ENCODE measurements at regions of chr11 and their contacts with region 1.

Region 1: DNA sequence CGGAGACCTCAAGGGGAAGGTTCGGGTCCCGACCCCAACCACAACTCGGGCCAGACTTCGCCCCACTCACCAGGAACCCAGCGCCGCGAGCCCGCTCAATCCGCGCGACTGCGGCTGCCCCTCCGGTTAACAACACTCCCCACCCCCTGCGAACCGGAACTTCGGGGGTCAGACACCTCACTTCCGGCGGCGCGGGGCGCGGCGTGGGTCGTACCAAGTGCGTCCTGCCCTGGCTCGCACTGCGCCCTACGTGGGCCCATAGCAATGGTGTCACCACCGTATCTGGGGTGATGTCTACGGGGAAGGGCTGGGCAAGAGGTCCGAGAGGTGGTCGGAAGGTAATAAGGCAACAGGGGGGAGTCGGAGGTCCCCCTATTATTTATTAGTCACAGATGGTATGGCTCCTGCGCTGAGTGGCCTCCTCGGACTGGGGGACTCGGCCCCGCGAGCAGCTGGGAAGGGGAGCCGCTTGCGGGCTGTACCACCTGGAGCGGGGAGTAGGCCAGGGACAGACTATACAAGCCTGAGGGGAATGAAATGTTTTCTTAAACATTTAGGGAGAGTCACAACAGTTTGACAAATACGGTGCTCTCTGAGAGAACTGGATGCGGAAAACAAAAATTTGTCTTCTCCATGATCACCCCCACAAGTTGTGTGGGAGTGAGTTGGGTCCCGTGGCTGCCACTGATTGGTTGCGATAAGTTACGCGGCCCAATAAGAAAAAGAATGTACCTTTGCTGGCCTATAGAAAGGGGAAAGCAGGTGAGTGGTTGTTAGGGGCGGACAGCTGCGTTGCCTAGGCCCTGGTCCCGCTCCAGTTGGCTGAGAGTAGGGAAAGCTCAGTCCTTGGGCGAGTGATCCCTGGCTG is at the start of gene SYVN1:
- DNase-seq: peak; percentile 98
- H3K4me3 Mint-ChIP-seq: peak within 1 kb of the TSS; percentile 99
- H3K27ac Mint-ChIP-seq: peak within 1 kb of the TSS; percentile 100
- H3K4me1 Mint-ChIP-seq: peaks cover 28% of the 10 kb centered on the region
- H3K27me3 Mint-ChIP-seq: no peaks in the 10 kb centered on the region
- CTCF ChIP-seq: no peak
- total RNA-seq, gene SYVN1: 74.9 and 99.8 TPM in 2 replicates

Region 2: DNA sequence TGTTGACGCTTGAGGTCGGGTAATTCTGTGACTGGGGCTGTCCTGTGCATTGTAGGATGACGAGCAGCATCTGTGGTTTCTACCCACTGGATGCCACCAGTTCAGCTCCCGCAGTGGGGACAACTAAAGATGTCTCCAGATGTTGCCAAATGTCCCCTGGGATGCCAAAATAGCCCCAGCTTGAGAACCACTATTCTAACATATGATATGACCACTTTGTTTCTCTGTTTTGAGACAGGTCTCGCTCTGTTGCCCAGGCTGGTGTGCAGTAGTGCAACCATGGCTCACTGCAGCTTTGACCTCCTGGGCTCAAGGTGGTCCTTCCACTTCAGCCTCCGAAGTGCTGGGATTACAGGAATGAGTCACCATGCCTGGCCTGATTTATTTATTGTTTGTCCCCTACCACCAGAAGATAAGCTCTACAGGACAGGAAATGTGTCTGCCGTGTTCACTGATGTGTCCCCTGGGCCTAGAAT is 319.9 kb before region 1 on chr11:
- CTCF ChIA-PET with region 1: no interaction called
- POLR2A ChIA-PET with region 1: no interaction called
- intact Hi-C with region 1: no loop called
- DNase-seq: no peak
- H3K4me3 Mint-ChIP-seq: no peak overlapping the region
- H3K27ac Mint-ChIP-seq: no peak overlapping the region
- H3K4me1 Mint-ChIP-seq: peaks cover 6% of the 10 kb centered on the region
- H3K27me3 Mint-ChIP-seq: no peaks in the 10 kb centered on the region
- CTCF ChIP-seq: no peak

Region 3: DNA sequence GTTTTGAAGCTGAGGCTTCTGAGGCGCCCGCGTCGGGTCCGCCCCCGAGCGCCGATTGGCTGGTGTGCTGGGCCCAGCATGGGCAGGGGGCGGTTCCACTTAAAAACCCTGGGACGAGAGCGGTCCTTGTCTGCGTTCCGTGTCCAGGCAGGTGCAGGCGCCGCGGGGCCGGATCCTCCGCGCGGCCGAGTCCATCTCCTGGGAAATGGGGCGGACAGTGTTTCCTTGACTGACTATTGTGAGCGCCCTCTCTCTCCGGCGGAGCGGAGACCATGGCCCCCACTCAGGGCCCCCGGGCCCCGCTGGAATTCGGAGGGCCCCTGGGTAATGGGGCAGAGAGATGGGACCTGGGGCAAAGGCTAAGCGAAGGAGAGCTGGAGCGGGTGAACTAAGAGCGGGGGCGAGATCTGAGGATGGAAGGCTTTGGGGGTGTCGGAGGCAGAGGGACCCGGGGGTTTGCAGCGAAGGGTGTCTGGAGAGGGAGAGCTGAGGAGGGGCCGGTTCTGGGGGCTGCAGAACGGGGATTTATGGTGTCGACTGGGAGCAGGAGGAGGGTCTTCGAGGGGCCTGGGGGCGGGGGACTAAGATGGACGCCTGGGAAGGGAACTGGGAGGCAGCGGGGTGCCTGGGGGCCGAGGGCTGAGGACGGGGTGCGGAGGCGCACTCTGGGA is 22.7 kb before region 1 on chr11 and contains the start of gene TM7SF2:
- CTCF ChIA-PET with region 1: interaction called, 4 read pairs
- POLR2A ChIA-PET with region 1: interaction called, 56 read pairs
- intact Hi-C with region 1: no loop called
- DNase-seq: peak; percentile 96
- H3K4me3 Mint-ChIP-seq: peak within 1 kb of the TSS; percentile 93
- H3K27ac Mint-ChIP-seq: peak within 1 kb of the TSS; percentile 94
- H3K4me1 Mint-ChIP-seq: peaks cover 11% of the 10 kb centered on the region
- H3K27me3 Mint-ChIP-seq: no peaks in the 10 kb centered on the region
- CTCF ChIP-seq: no peak
- total RNA-seq, gene TM7SF2: 8.5 and 14.0 TPM in 2 replicates

Region 4: GRCh38 chr11:65117216-65118096 is 17.2 kb before region 1 on chr11 and contains the start of gene ZNHIT2:
- CTCF ChIA-PET with region 1: interaction called, 6 read pairs
- POLR2A ChIA-PET with region 1: interaction called, 138 read pairs
- intact Hi-C with region 1: no loop called
- DNase-seq: peak; percentile 99
- H3K4me3 Mint-ChIP-seq: peak within 1 kb of the TSS; percentile 82
- H3K27ac Mint-ChIP-seq: peak within 1 kb of the TSS; percentile 88
- H3K4me1 Mint-ChIP-seq: peaks cover 16% of the 10 kb centered on the region
- H3K27me3 Mint-ChIP-seq: no peaks in the 10 kb centered on the region
- CTCF ChIP-seq: peak; percentile 84
- total RNA-seq, gene ZNHIT2: 22.0 and 23.6 TPM in 2 replicates

Region 5: DNA sequence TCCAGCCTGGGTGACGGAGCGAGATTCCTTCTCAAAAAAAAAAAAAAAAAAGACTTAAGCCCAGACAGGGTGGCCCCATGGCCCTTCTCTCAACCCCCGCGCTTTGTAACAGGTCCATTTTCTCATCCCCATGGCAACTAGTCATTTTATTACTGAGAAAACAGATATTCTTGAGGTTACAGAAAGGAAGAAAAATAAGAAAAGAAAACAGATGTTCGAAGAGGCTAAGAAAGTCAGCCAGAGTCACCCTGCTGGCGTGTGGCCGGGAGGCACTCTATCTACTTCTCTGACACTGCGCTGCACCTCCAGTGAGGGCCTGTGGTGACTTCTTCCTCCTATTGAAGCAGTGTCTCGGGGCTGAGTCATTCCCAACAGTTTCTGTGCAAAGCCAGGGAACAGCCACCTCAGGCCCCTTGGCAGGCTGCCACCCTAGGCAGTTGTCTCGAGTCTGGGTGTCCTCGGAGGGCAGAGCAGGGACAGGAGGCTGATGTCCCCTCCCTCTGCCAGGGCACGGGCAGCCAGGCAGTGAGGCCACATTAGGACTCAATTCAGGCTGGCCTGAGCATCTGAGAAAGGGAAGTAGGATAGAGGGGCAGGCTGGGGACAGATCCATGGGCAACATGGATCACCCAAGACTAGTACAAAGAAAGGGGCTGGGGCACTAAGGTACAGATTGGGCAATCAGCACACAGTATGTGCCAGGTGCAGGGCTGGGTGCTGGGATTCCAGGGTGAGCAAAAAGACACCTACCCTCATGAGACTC is 16.1 kb after region 1 on chr11:
- CTCF ChIA-PET with region 1: interaction called, 4 read pairs
- POLR2A ChIA-PET with region 1: interaction called, 56 read pairs
- intact Hi-C with region 1: no loop called
- DNase-seq: peak; percentile 96
- H3K4me3 Mint-ChIP-seq: peak overlapping the region; percentile 45
- H3K27ac Mint-ChIP-seq: peak overlapping the region; percentile 78
- H3K4me1 Mint-ChIP-seq: peaks cover 22% of the 10 kb centered on the region
- H3K27me3 Mint-ChIP-seq: no peaks in the 10 kb centered on the region
- CTCF ChIP-seq: no peak

Region 6: DNA sequence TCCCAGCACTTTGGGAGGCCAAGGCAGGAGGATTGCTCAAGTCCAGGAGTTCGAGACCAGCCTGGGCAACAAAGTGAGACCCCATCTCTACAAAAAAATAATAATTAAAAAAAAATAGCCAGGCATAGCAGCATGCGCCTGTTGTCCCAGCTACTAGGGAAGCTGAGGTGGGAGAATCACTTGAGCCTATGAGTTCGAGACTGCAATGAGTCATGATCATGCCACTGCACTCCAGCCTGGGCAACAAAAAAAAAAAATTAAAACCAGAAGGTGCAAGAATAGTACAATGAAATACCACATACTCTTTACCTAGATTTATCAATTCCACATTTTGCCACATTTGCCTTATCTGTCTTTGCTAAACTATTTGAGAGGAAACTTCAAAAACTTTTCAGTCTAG is 207.2 kb after region 1 on chr11:
- CTCF ChIA-PET with region 1: no interaction called
- POLR2A ChIA-PET with region 1: no interaction called
- intact Hi-C with region 1: no loop called
- DNase-seq: no peak
- H3K4me3 Mint-ChIP-seq: no peak overlapping the region
- H3K27ac Mint-ChIP-seq: no peak overlapping the region
- H3K4me1 Mint-ChIP-seq: peaks cover 13% of the 10 kb centered on the region
- H3K27me3 Mint-ChIP-seq: no peaks in the 10 kb centered on the region
- CTCF ChIP-seq: no peak

Measured in MCF 10A (cell line).